ENCODE measurements at regions of chr1 and their contacts with region 1.

Region 1: GRCh38 chr1:111399792-111400610 is 27.5 kb downstream of the OVGP1 start:
- DNase-seq: peak; percentile 66
- H3K4me3 Mint-ChIP-seq: no peak overlapping the region
- H3K27ac Mint-ChIP-seq: no peak overlapping the region
- H3K4me1 Mint-ChIP-seq: peaks cover 22% of the 10 kb centered on the region
- H3K27me3 Mint-ChIP-seq: no peaks in the 10 kb centered on the region

Region 2: DNA sequence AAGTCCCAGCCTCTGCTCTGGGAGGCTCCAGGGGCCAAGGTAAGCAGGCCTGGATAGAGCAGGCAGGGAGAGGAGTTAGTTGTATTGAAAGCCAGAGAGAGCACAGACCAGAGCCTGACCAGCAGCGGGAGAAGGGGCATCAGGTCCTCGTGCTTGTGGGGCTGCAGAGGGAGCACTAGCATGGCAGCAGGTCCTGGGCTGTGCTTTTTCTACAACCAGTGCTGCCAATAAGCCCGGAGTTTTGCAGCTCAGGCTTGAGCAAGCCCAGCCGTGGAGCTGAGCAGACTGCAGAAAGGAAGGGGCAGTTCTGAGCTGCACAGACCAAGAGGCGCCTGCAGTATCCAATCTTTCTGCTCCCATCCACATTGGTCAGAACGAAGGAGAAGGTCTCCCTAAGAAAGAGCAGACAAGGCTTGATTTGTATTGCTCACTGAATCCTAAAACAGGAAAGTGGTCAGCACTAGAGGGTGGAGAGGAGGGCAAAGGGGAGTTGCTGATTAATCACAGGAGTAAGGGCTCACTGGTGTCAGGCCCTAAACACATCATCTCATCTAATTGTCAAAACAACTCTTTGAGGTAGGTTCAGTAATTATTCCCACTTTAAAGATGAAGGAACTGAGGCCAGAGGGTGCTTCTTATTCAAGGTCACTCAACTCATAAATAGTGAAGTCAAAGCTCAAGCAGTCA is 202.3 kb before region 1 on chr1:
- CTCF ChIA-PET with region 1: interaction called, 15 read pairs
- intact Hi-C with region 1: no loop called
- DNase-seq: peak; percentile 70
- H3K4me3 Mint-ChIP-seq: peak overlapping the region; percentile 98
- H3K27ac Mint-ChIP-seq: peak overlapping the region; percentile 99
- H3K4me1 Mint-ChIP-seq: peaks cover 71% of the 10 kb centered on the region
- H3K27me3 Mint-ChIP-seq: no peaks in the 10 kb centered on the region

Region 3: GRCh38 chr1:111267801-111268508 is 132.0 kb before region 1 on chr1:
- CTCF ChIA-PET with region 1: interaction called, 10 read pairs
- intact Hi-C with region 1: loop called (anchors 5 kb)
- DNase-seq: no peak
- H3K4me3 Mint-ChIP-seq: no peak overlapping the region
- H3K27ac Mint-ChIP-seq: no peak overlapping the region
- H3K4me1 Mint-ChIP-seq: peaks cover 11% of the 10 kb centered on the region
- H3K27me3 Mint-ChIP-seq: peaks cover 23% of the 10 kb centered on the region

Region 4: DNA sequence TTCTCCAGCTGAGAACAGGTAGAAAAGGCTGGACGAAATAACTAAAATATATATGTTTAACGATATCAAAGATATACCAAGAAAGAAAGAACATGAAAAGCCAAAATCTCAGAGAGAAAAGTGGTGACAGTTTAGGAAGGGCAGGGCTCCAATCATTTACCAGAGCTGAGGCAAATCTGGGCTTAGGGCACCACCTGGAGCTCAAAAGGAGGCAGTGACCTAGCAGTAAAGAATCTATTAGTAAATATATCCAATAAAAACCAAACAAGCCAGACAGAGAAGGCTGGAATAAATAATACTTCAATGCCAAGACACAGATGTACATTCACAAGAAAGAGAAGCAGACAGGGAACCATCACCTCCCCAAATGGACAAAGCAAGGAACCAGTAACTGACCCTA is 65.8 kb before region 1 on chr1:
- CTCF ChIA-PET with region 1: interaction called, 3 read pairs
- intact Hi-C with region 1: loop called (anchors 2 kb)
- DNase-seq: peak; percentile 76
- H3K4me3 Mint-ChIP-seq: no peak overlapping the region
- H3K27ac Mint-ChIP-seq: no peak overlapping the region
- H3K4me1 Mint-ChIP-seq: no peaks in the 10 kb centered on the region
- H3K27me3 Mint-ChIP-seq: no peaks in the 10 kb centered on the region

Region 5: GRCh38 chr1:111422566-111423391 is 22.8 kb after region 1 on chr1:
- CTCF ChIA-PET with region 1: interaction called, 12 read pairs
- intact Hi-C with region 1: no loop called
- DNase-seq: no peak
- H3K4me3 Mint-ChIP-seq: no peak overlapping the region
- H3K27ac Mint-ChIP-seq: no peak overlapping the region
- H3K4me1 Mint-ChIP-seq: no peaks in the 10 kb centered on the region
- H3K27me3 Mint-ChIP-seq: no peaks in the 10 kb centered on the region